ENCODE measurements at regions of chr16 and their contacts with region 1.

Region 1: DNA sequence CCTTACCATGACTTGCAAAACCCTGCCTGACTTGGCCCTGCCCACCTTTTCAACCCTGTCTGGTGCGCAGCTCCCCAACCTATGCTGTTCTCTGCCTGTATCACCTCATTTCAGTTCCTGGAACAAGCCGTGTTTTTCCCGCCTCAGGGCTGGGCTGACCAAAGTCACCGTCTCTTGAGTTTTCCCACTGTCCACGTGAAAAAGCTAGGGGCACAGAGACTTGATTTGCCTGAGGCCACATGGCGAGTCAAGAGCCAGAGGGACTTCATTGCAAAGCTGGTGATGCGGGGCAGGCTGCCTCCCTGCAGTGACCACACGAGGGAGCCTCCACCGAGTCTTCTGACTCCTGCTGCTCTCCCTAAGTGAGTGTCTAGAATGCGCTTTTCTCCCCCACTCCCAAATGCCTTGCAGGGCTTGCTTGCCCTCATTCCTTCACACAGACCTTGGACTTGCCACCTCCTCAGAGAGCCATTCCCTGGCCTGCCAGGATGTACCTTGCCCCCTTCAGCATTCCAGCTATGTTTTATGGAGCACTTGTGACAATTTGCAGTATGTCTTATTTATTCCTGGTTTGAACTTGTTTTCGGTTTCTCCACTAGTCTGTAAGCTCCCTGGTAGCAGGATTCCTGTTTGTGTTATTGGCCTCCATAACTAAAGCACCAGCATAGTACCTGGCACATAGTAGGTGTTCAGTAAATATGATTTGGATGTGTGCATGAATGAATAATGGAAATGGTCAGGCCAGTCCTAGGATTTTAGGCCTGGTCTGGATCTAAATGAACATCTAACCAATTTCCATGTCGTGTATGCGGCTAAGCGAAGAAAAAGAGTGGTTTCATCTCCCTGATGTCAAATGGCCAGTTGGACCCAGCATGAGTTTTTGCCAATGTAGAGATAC is 252.3 kb downstream of the SNX29 start:
- DNase-seq: peak; percentile 53
- CTCF ChIP-seq: peak; percentile 62

Region 2: GRCh38 chr16:12120217-12120981 is 108.5 kb before region 1 on chr16:
- CTCF ChIA-PET with region 1: no interaction called
- POLR2A ChIA-PET with region 1: no interaction called
- DNase-seq: no peak
- CTCF ChIP-seq: no peak

Region 3: GRCh38 chr16:12217341-12217740 is 11.5 kb before region 1 on chr16:
- CTCF ChIA-PET with region 1: interaction called, 10 read pairs
- POLR2A ChIA-PET with region 1: no interaction called
- DNase-seq: no peak
- CTCF ChIP-seq: no peak

Region 4: DNA sequence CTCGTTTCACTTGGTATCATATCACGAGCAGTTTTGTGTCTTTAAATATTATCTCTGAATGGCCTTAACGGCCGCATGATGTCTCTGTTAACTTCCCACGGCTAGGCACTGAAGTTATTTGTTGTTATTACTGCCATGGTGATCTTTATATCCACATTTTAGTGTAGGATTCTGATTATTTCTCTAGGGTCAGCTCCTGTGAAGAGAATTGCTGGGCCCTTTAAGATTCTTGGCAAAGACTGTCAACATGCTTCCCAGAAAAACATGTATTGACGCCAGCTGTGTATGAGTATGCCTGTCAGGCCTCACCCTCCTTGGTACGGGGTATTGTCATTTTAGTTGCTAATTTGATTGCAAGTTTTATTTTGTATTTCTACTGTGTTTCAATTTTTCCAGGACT is 11.2 kb after region 1 on chr16:
- CTCF ChIA-PET with region 1: interaction called, 15 read pairs
- POLR2A ChIA-PET with region 1: interaction called, 3 read pairs
- DNase-seq: no peak
- CTCF ChIP-seq: no peak

Region 5: GRCh38 chr16:12320298-12320706 is 91.5 kb after region 1 on chr16:
- CTCF ChIA-PET with region 1: no interaction called
- POLR2A ChIA-PET with region 1: no interaction called
- DNase-seq: no peak
- CTCF ChIP-seq: no peak

Measured in GM10248 (cell line).